Left ventricle myocardium superior (tissue), 1 donor: ENCODE measurements at regions of chr18 and their contacts with region 1.

Region 1: GRCh38 chr18:77207540-77207939 is 42.1 kb upstream of the GALR1 start:
- DNase-seq: peak; percentile 77
- ATAC-seq: peak; percentile 60

Region 2: GRCh38 chr18:77000527-77000926 is 207.0 kb before region 1 on chr18:
- intact Hi-C with region 1: loop called (anchors 5 kb)
- DNase-seq: peak; percentile 76
- ATAC-seq: peak; percentile 44

Region 3: DNA sequence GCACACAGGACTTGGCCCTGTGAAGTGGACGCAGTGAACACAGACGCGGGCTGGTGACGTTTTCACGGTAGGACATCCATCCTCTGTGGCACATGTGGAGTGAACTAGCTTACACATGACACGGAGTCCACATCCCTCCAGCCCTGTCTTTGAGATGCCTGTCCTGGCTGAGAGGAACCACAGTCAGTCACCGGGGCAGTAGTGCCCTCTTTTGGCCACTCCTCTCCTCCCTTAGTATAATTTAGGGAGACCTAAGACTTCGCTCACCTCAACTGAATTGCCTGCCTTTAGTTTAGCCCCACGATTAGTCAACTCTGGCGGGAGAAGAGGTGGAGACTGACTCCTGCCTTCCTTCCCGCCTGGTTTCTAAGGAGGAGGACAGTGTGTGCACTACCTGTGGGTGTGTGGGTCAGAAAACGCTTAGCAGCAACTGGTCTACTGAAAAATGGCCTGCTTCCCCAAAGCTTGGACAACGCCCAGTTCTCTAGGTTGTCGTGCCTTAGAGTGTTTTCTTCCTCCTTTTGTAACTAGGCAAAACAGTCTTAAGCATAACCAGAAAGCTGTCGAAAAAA is 145.5 kb before region 1 on chr18:
- intact Hi-C with region 1: loop called (anchors 5 kb)
- DNase-seq: no peak
- ATAC-seq: peak; percentile 26

Region 4: GRCh38 chr18:77147418-77147852 is 60.1 kb before region 1 on chr18:
- intact Hi-C with region 1: loop called (anchors 10 kb)
- DNase-seq: no peak
- ATAC-seq: peak; percentile 41

Region 5: GRCh38 chr18:77300579-77300978 is 93.0 kb after region 1 on chr18:
- intact Hi-C with region 1: no loop called
- DNase-seq: no peak
- ATAC-seq: no peak

Region 6: DNA sequence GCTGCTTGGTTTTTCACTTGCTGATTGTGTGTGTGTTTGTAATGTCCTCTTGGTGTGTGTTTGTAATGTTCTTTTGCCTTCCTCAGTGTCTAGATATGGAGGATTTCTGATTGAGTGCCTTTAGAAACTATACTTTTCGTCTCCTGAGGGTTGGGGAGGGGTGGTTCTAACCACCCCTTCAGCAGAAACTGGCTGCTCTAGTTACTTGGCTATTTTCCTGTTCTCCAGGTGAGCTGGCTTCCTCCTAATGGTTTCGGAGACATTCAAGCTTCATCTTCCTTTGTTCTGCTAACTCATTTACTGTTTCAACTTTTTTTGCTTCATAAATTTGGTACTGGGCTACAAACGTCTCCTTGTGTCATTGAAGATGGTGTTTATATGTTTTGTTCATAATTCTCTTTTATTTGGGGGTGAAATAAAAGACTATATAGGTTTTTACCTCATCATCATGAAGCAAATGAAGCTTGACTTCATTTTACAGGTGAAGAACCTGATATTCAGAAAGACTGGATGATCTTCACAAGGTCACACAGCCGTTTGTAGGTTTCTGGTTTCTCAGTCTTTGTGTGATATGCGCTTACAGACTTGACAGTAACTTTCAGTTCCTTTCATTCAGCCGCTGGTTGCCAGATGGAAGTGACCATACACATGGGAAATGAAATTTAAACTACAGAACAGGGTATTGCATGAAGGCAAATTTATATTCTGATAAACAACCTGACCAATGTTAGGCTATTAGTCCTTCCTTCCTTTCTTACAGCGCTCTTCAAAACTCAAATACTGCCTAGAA is 280.6 kb after region 1 on chr18:
- intact Hi-C with region 1: no loop called
- DNase-seq: no peak
- ATAC-seq: no peak